Right lobe of liver (tissue), 6 donors: ENCODE measurements at regions of chr1 and their contacts with region 1.

Region 1: GRCh38 chr1:182084487-182085316 is 23.2 kb upstream of the ZNF648 start:
- DNase-seq: peak; percentile 80 to 84 (median 84)
- ATAC-seq: peak; percentile 94 to 98 (median 96)
- H3K4me3 ChIP-seq: no peak overlapping the region
- H3K27ac ChIP-seq: no peak overlapping the region
- H3K4me1 ChIP-seq: peaks cover 0 to 5% (median 1%) of the 10 kb centered on the region in 4 donors
- H3K27me3 ChIP-seq: no peaks in the 10 kb centered on the region
- CTCF ChIP-seq: peak; percentile 78 to 97 (median 81)
- POLR2A ChIP-seq: no peak

Region 2: GRCh38 chr1:182029379-182030331 is 55.0 kb before region 1 on chr1:
- intact Hi-C with region 1: no loop called
- DNase-seq: peak; percentile 98 to 99 (median 98)
- ATAC-seq: peak; percentile 98 to 99 (median 98)
- H3K4me3 ChIP-seq: peak overlapping the region; percentile 51 to 71 (median 68)
- H3K27ac ChIP-seq: peak overlapping the region; percentile 55 to 62 (median 56)
- H3K4me1 ChIP-seq: peaks cover 0 to 6% (median 3%) of the 10 kb centered on the region in 4 donors
- H3K27me3 ChIP-seq: no peaks in the 10 kb centered on the region
- CTCF ChIP-seq: peak; percentile 42 to 51 (median 49)
- POLR2A ChIP-seq: peak; percentile 82

Region 3: GRCh38 chr1:182041615-182042014 is 43.1 kb before region 1 on chr1:
- intact Hi-C with region 1: no loop called
- DNase-seq: no peak
- ATAC-seq: peak in 3 of 4 donors; percentile 30 to 55 (median 48)
- H3K4me3 ChIP-seq: no peak overlapping the region
- H3K27ac ChIP-seq: no peak overlapping the region
- H3K4me1 ChIP-seq: no peaks in the 10 kb centered on the region
- H3K27me3 ChIP-seq: no peaks in the 10 kb centered on the region
- CTCF ChIP-seq: no peak
- POLR2A ChIP-seq: no peak

Region 4: GRCh38 chr1:182143154-182143657 is 58.5 kb after region 1 on chr1:
- intact Hi-C with region 1: loop called in 1 of 2 experiments (anchors 5 kb)
- DNase-seq: peak; percentile 90 to 93 (median 91)
- ATAC-seq: peak; percentile 81 to 88 (median 84)
- H3K4me3 ChIP-seq: no peak overlapping the region
- H3K27ac ChIP-seq: peak overlapping the region; percentile 71 to 80 (median 72)
- H3K4me1 ChIP-seq: peaks cover 0 to 10% (median 0%) of the 10 kb centered on the region in 4 donors
- H3K27me3 ChIP-seq: no peaks in the 10 kb centered on the region
- CTCF ChIP-seq: peak; percentile 92 to 98 (median 94)
- POLR2A ChIP-seq: no peak

Region 5: GRCh38 chr1:182397771-182398393 is 313.2 kb after region 1 on chr1:
- intact Hi-C with region 1: loop called (anchors 5 to 10 kb)
- DNase-seq: no peak
- ATAC-seq: peak in 2 of 4 donors; percentile 10 to 36
- H3K4me3 ChIP-seq: no peak overlapping the region
- H3K27ac ChIP-seq: no peak overlapping the region
- H3K4me1 ChIP-seq: peaks cover 0 to 3% (median 0%) of the 10 kb centered on the region in 4 donors
- H3K27me3 ChIP-seq: no peaks in the 10 kb centered on the region
- CTCF ChIP-seq: no peak
- POLR2A ChIP-seq: no peak

Region 6: GRCh38 chr1:182404781-182405180 is 320.1 kb after region 1 on chr1:
- intact Hi-C with region 1: loop called (anchors 5 to 10 kb)
- DNase-seq: no peak
- ATAC-seq: no peak
- H3K4me3 ChIP-seq: no peak overlapping the region
- H3K27ac ChIP-seq: no peak overlapping the region
- H3K4me1 ChIP-seq: peaks cover 0 to 4% (median 0%) of the 10 kb centered on the region in 4 donors
- H3K27me3 ChIP-seq: no peaks in the 10 kb centered on the region
- CTCF ChIP-seq: no peak
- POLR2A ChIP-seq: no peak